AG04450 (cell line): ENCODE measurements at regions of chr1 and their contacts with region 1.

Region 1: DNA sequence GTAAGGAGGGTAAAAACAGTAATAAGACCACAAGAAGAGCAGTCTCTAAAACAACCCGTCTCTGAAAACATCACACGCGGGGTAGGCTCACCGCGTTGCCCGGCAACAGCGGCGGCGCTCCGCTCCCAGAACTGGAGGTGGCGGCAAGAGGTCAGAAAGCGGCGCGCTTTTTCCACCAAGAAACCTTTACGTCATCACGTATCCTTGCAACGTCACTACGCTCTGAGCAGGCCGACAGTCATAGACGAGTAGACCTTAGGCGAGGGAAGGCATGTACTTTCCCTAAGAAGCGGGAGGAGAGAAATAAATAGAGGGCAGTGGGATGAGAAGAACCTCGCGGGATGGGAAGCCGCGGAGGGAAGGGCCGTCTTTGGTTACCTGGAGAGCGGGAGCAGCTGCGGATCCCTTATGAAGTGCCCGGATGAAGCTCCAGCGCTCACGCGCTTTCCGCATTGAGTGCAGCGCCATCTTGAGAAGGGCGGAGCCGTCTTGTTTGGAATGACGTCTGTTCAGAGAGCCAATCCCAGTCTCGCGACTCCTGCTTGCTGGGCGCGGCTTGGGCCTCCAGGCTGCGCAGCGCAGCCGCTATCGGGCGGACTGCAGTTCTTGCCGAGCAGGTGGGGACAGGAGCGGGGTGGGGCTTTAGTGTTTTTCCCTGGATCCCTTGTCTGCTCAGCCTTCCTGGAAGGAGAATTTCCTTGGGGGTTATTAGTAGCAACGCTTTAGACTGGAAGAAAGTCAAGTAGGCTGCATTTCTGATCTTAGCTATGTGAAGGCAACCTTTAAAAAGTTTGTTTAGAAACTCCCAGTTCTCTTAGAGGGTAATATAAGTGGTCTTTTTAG is at the start of gene WARS2:
- DNase-seq: peak; percentile 93
- H3K4me3 ChIP-seq: peak within 1 kb of the TSS; percentile 78
- H3K27ac ChIP-seq: peak within 1 kb of the TSS; percentile 99
- H3K27me3 ChIP-seq: no peaks in the 10 kb centered on the region
- CTCF ChIP-seq: no peak
- polyA plus RNA-seq, gene WARS2: 12.4 and 12.6 TPM in 2 replicates

Region 2: GRCh38 chr1:119068427-119068826 is 72.0 kb before region 1 on chr1:
- CTCF ChIA-PET with region 1: no interaction called
- POLR2A ChIA-PET with region 1: no interaction called
- DNase-seq: no peak
- H3K4me3 ChIP-seq: no peak overlapping the region
- H3K27ac ChIP-seq: no peak overlapping the region
- H3K27me3 ChIP-seq: no peaks in the 10 kb centered on the region
- CTCF ChIP-seq: no peak

Region 3: GRCh38 chr1:119160866-119161265 is 20.5 kb after region 1 on chr1:
- CTCF ChIA-PET with region 1: interaction called, 4 read pairs
- POLR2A ChIA-PET with region 1: interaction called, 11 read pairs
- DNase-seq: peak; percentile 37
- H3K4me3 ChIP-seq: no peak overlapping the region
- H3K27ac ChIP-seq: no peak overlapping the region
- H3K27me3 ChIP-seq: no peaks in the 10 kb centered on the region
- CTCF ChIP-seq: no peak

Region 4: DNA sequence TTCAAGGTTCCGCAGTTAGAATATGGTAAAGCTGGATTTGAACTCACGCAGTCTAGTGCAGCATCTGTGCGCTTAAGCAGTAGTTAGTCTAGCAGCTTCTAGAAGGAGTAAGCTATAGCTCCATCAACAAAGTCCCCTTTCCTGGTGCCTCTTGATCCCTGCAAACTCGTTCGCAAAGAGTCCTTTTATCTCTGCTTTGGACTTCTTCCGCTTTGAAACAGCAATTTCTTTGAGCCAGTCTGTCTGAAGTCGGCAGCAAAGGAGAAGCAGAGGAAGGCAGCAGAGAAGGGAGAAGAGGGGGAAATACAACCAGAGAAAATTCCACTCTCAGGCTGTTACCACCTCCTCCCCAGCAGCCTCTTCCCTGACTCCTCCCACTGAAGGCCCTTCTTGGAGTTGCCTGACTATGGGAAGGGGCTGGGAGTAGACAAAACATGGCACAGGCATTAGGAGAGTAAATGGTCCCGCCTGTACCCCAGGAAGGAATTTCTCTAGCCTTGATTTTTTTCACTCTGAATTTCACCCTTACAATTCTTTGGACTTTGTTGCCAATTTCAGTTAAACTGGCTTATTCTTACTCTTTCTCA is 300.4 kb after region 1 on chr1:
- CTCF ChIA-PET with region 1: no interaction called
- POLR2A ChIA-PET with region 1: no interaction called
- DNase-seq: no peak
- H3K4me3 ChIP-seq: no peak overlapping the region
- H3K27ac ChIP-seq: no peak overlapping the region
- H3K27me3 ChIP-seq: no peaks in the 10 kb centered on the region
- CTCF ChIP-seq: no peak